GM23248 (cell line): ENCODE measurements at regions of chr6 and their contacts with region 1.

Region 1: GRCh38 chr6:41591859-41592502 is 45.8 kb downstream of the FOXP4 start:
- DNase-seq: peak; percentile 55
- H3K4me3 ChIP-seq: no peak overlapping the region
- H3K27ac ChIP-seq: no peak overlapping the region
- H3K4me1 ChIP-seq: peaks cover 12% of the 10 kb centered on the region
- H3K27me3 ChIP-seq: no peaks in the 10 kb centered on the region

Region 2: GRCh38 chr6:41424370-41425058 is 167.5 kb before region 1 on chr6:
- in situ Hi-C with region 1: loop called (anchors 25 kb)
- DNase-seq: peak; percentile 74
- H3K4me3 ChIP-seq: no peak overlapping the region
- H3K27ac ChIP-seq: no peak overlapping the region
- H3K4me1 ChIP-seq: peaks cover 8% of the 10 kb centered on the region; the same call in 1 of the 2 replicates
- H3K27me3 ChIP-seq: peaks cover 35% of the 10 kb centered on the region